Naive thymus-derived CD4-positive, alpha-beta T cell (primary cell): ENCODE measurements at regions of chr9 and their contacts with region 1.

Region 1: DNA sequence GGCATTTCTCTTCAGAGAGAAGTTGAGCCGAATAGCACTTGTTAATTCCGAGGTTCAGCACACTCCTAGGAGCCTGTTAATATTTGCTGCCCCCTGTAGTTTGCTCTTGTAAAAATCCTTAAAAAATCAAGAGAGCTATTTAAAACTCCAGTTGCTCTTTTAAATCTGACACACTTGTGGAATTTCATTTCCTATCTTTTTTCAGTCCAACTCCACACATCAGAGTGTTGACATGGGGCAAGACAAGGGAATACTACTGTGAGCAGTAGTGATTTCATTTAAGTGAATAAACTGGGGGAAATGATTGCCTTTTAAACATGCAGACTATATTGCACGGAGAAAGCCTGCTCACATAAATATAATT is 1096.3 kb upstream of the DMAC1 start:
- DNase-seq: peak in 4 of 9 donors; percentile 1 to 7 (median 3)
- ATAC-seq: no peak
- H3K4me3 ChIP-seq: no peak overlapping the region
- H3K4me3 Mint-ChIP-seq: no peak overlapping the region
- H3K27ac ChIP-seq: no peak overlapping the region
- H3K27ac Mint-ChIP-seq: no peak overlapping the region
- H3K4me1 ChIP-seq: no peaks in the 10 kb centered on the region
- H3K4me1 Mint-ChIP-seq: no peaks in the 10 kb centered on the region
- H3K27me3 ChIP-seq: no peaks in the 10 kb centered on the region
- H3K27me3 Mint-ChIP-seq: peaks cover 0 to 7% (median 3%) of the 10 kb centered on the region in 5 donors

Region 2: GRCh38 chr9:7405924-7406604 is 1489.8 kb before region 1 on chr9:
- CTCF ChIA-PET with region 1: no interaction called
- POLR2A ChIA-PET with region 1: no interaction called
- intact Hi-C with region 1: loop called in 1 of 2 experiments (anchors 10 kb)
- DNase-seq: no peak
- ATAC-seq: no peak
- H3K4me3 ChIP-seq: no peak overlapping the region
- H3K4me3 Mint-ChIP-seq: no peak overlapping the region
- H3K27ac ChIP-seq: no peak overlapping the region
- H3K27ac Mint-ChIP-seq: peak overlapping the region in 1 of 9 donors; percentile 4
- H3K4me1 ChIP-seq: no peaks in the 10 kb centered on the region
- H3K4me1 Mint-ChIP-seq: peaks cover 0 to 11% (median 0%) of the 10 kb centered on the region in 7 donors
- H3K27me3 ChIP-seq: no peaks in the 10 kb centered on the region
- H3K27me3 Mint-ChIP-seq: peaks cover 14 to 25% (median 17%) of the 10 kb centered on the region in 5 donors